CD4-positive, alpha-beta T cell (primary cell): ENCODE measurements at regions of chr14 and their contacts with region 1.

Region 1: GRCh38 chr14:95442633-95443021 is 73.8 kb downstream of the SYNE3 start:
- DNase-seq: peak; percentile 65 to 86 (median 72)
- ATAC-seq: peak; percentile 96
- H3K4me3 ChIP-seq: no peak overlapping the region
- H3K4me3 Mint-ChIP-seq: no peak overlapping the region
- H3K27ac ChIP-seq: peak overlapping the region in 1 of 2 donors; percentile 8
- H3K27ac Mint-ChIP-seq: peak overlapping the region; percentile 73
- H3K4me1 ChIP-seq: peaks cover 8% of the 10 kb centered on the region
- H3K4me1 Mint-ChIP-seq: peaks cover 23% of the 10 kb centered on the region
- H3K27me3 ChIP-seq: no peaks in the 10 kb centered on the region
- H3K27me3 Mint-ChIP-seq: no peaks in the 10 kb centered on the region
- CTCF ChIP-seq: peak; percentile 85

Region 2: DNA sequence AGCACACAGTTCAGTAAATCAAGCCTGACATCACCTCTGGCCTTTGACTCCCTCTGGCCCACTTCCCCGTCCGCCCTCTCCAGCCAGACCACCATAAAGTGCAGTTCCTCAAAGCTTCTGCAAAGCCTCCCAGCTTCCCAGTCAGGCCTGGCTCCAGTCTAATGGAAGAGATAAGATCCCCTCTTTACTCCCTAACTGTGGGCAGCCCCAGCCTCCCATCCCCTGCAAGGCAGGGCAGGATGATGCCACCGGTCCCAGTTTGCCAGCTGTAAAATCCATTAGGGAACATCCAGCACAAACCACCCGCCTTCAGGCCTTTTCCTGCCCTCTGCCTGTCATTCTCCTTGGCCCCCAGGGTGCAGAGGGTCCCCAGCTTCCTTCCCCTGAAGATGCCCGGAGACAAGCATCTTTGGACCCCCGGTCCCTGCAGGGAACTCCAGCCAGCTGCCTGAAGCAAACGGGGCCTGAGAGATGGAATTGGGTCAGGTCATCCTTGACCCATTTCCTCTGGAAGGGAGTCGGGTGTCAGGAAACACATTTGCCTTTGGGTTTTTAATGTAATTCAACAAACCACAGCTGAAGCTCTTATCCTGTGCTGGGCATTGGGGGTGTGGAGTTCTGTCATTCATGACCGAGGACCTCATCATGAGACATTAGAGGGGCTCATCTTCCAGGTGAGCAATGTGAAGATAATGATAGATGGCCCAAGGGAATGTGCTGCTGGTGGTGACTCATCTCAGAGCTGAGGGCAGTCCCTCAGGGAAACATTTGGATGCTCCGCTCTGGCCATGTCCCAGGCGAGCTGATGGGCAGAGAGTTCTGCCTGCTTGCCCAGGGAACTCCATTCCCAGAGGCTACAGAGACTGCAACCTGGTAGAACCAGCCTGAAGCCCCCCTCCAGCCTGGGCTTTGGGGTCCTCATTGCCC is 29.1 kb before region 1 on chr14:
- CTCF ChIA-PET with region 1: no interaction called
- POLR2A ChIA-PET with region 1: no interaction called
- intact Hi-C with region 1: no loop called
- DNase-seq: no peak
- ATAC-seq: no peak
- H3K4me3 ChIP-seq: no peak overlapping the region
- H3K4me3 Mint-ChIP-seq: no peak overlapping the region
- H3K27ac ChIP-seq: no peak overlapping the region
- H3K27ac Mint-ChIP-seq: no peak overlapping the region
- H3K4me1 ChIP-seq: no peaks in the 10 kb centered on the region
- H3K4me1 Mint-ChIP-seq: no peaks in the 10 kb centered on the region
- H3K27me3 ChIP-seq: no peaks in the 10 kb centered on the region
- H3K27me3 Mint-ChIP-seq: no peaks in the 10 kb centered on the region
- CTCF ChIP-seq: no peak

Region 3: DNA sequence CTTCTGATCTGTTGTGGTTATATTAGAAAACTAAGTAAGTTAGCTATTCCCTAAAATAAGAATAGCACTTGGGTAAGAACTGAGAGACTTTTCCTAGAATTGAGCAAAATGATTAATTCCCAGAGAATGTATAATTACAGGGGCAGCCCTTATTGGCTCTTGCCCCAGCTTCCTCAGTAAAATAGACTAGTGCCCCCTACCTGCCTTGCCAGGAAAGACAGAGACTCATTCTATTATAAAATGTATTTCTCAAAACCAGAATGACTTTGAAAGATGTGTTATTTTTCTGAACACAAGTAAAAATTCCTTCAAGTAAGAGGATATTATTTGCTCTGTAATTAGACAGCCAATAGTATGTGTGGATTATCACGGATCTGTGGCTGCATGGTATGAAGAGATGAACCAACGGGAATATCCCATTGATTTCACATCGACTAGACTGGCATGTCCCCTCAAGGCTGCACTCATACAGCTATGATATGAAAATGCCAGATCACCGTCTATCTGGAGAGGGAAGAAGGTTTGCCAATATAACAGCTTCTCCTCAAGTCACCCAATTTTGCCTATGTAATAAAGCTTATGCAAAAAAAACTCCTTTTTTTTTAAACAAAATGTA is 84.9 kb after region 1 on chr14:
- CTCF ChIA-PET with region 1: interaction called, 33 read pairs
- POLR2A ChIA-PET with region 1: interaction called, 17 read pairs
- intact Hi-C with region 1: loop called (anchors 1 kb)
- DNase-seq: peak in 9 of 14 experiments; percentile 36 to 72 (median 48)
- ATAC-seq: no peak
- H3K4me3 ChIP-seq: no peak overlapping the region
- H3K4me3 Mint-ChIP-seq: no peak overlapping the region
- H3K27ac ChIP-seq: no peak overlapping the region
- H3K27ac Mint-ChIP-seq: peak overlapping the region; percentile 31
- H3K4me1 ChIP-seq: peaks cover 41% of the 10 kb centered on the region
- H3K4me1 Mint-ChIP-seq: peaks cover 63% of the 10 kb centered on the region
- H3K27me3 ChIP-seq: no peaks in the 10 kb centered on the region
- H3K27me3 Mint-ChIP-seq: no peaks in the 10 kb centered on the region
- CTCF ChIP-seq: peak; percentile 93

Region 4: GRCh38 chr14:95534299-95535225 is 91.9 kb after region 1 on chr14 and contains the start of gene GLRX5:
- CTCF ChIA-PET with region 1: interaction called, 17 read pairs
- POLR2A ChIA-PET with region 1: interaction called, 10 read pairs
- intact Hi-C with region 1: loop called in 1 of 2 experiments (anchors 2 kb)
- DNase-seq: peak; percentile 94 to 100 (median 96)
- ATAC-seq: peak; percentile 86
- H3K4me3 ChIP-seq: peak within 1 kb of the TSS; percentile 73
- H3K4me3 Mint-ChIP-seq: peak within 1 kb of the TSS; percentile 96
- H3K27ac ChIP-seq: peak within 1 kb of the TSS; percentile 78 to 85
- H3K27ac Mint-ChIP-seq: peak within 1 kb of the TSS; percentile 85
- H3K4me1 ChIP-seq: peaks cover 37% of the 10 kb centered on the region
- H3K4me1 Mint-ChIP-seq: peaks cover 73% of the 10 kb centered on the region
- H3K27me3 ChIP-seq: no peaks in the 10 kb centered on the region
- H3K27me3 Mint-ChIP-seq: no peaks in the 10 kb centered on the region
- CTCF ChIP-seq: no peak
- total RNA-seq, gene GLRX5: 11.3 to 11.9 TPM

Region 5: DNA sequence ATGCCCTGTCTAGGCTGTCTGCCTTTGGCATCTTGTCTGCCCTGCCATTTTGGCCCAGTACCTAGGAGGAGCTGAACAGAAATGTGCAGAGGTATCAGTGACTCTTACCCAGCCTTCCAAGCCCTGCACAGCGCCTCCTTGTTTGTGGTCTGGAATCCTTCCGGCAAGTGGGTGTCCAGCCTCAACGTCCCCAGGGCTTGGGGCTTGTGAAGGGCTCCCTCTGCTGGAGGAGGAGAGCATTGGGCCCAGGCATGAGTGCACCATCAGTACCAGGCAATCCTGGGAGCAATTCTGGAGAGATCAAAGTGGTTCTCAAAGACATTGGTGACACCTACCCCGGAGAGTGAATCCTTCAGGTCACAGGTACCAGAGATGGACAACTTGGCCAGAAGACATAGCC is 241.2 kb after region 1 on chr14:
- CTCF ChIA-PET with region 1: no interaction called
- POLR2A ChIA-PET with region 1: no interaction called
- intact Hi-C with region 1: loop called in 1 of 2 experiments (anchors 5 kb)
- DNase-seq: peak in 9 of 14 experiments; percentile 1 to 55 (median 16)
- ATAC-seq: no peak
- H3K4me3 ChIP-seq: no peak overlapping the region
- H3K4me3 Mint-ChIP-seq: no peak overlapping the region
- H3K27ac ChIP-seq: no peak overlapping the region
- H3K27ac Mint-ChIP-seq: no peak overlapping the region
- H3K4me1 ChIP-seq: no peaks in the 10 kb centered on the region
- H3K4me1 Mint-ChIP-seq: no peaks in the 10 kb centered on the region
- H3K27me3 ChIP-seq: peaks cover 0 to 3% of the 10 kb centered on the region in 2 experiments
- H3K27me3 Mint-ChIP-seq: peaks cover 31% of the 10 kb centered on the region
- CTCF ChIP-seq: peak; percentile 61

Region 6: DNA sequence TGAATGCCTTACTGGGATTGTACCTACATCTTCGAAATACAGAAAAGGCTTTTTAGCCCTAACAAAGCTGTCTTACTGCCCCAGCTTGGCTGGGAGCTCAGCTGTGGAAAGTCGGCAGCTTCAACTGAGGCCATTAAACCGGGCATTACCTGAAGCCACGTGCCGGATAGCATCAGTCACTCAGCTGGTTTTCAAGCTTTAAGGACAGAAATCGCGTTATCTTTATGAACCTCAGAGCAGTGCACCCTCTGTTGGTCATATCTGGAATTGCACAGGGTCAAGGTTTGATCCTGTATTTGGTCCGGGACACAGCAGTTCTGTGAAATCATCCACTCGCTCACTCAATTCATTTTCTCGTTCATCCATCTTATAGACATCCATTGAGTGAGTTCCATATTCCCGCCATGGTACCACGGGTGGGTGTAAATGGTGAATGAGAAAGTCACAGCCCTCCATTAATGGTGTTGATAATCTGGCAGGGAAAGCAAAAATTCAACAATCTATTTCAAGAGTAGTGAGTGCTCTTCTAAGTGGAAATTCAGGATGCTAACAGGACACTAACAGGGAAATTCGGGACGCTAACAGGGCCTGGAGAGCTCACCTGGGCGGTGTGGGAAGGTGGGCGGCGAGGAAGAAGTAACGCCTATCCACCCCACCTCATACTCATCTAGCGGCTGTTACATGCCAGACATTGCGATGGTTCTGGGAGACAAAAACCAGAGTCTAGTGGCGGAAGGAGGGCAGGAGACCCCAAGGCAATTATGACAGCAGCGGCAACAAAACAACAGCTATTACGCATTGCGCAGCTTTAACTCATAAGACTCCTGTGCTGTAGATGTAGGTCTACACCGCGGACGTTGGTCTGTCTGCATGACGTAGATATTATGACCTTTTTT is 331.9 kb after region 1 on chr14:
- CTCF ChIA-PET with region 1: interaction called, 3 read pairs
- POLR2A ChIA-PET with region 1: no interaction called
- intact Hi-C with region 1: loop called in 1 of 2 experiments (anchors 1 kb)
- DNase-seq: peak in 13 of 14 experiments; percentile 27 to 69 (median 37)
- ATAC-seq: no peak
- H3K4me3 ChIP-seq: no peak overlapping the region
- H3K4me3 Mint-ChIP-seq: no peak overlapping the region
- H3K27ac ChIP-seq: no peak overlapping the region
- H3K27ac Mint-ChIP-seq: no peak overlapping the region
- H3K4me1 ChIP-seq: no peaks in the 10 kb centered on the region
- H3K4me1 Mint-ChIP-seq: peaks cover 5% of the 10 kb centered on the region
- H3K27me3 ChIP-seq: peaks cover 0 to 10% of the 10 kb centered on the region in 2 experiments
- H3K27me3 Mint-ChIP-seq: peaks cover 19% of the 10 kb centered on the region
- CTCF ChIP-seq: peak; percentile 93